Dendritic cell treated with granulocyte-macrophage colony-stimulating factor and Interleukin-4, amounts not matched to agents 40 ng/mL and 50 ng/mL, for 4 days (primary cell): ENCODE measurements at regions of chr11 and their contacts with region 1.

Region 1: GRCh38 chr11:33161120-33162005 is at the start of gene CSTF3:
- H3K4me3 Mint-ChIP-seq: peak within 1 kb of the TSS; percentile 95
- H3K27ac Mint-ChIP-seq: peak within 1 kb of the TSS; percentile 95
- H3K4me1 Mint-ChIP-seq: peaks cover 44% of the 10 kb centered on the region
- H3K27me3 Mint-ChIP-seq: no peaks in the 10 kb centered on the region

Region 2: GRCh38 chr11:32968541-32968940 is 192.8 kb before region 1 on chr11:
- intact Hi-C with region 1: no loop called
- H3K4me3 Mint-ChIP-seq: no peak overlapping the region
- H3K27ac Mint-ChIP-seq: peak overlapping the region; percentile 20
- H3K4me1 Mint-ChIP-seq: no peaks in the 10 kb centered on the region
- H3K27me3 Mint-ChIP-seq: no peaks in the 10 kb centered on the region

Region 3: GRCh38 chr11:33039274-33040032 is 121.9 kb before region 1 on chr11 and contains the start of gene TCP11L1:
- intact Hi-C with region 1: loop called (anchors 1 kb)
- H3K4me3 Mint-ChIP-seq: peak within 1 kb of the TSS; percentile 84
- H3K27ac Mint-ChIP-seq: peak within 1 kb of the TSS; percentile 98
- H3K4me1 Mint-ChIP-seq: peaks cover 36% of the 10 kb centered on the region
- H3K27me3 Mint-ChIP-seq: peaks cover 1% of the 10 kb centered on the region

Region 4: DNA sequence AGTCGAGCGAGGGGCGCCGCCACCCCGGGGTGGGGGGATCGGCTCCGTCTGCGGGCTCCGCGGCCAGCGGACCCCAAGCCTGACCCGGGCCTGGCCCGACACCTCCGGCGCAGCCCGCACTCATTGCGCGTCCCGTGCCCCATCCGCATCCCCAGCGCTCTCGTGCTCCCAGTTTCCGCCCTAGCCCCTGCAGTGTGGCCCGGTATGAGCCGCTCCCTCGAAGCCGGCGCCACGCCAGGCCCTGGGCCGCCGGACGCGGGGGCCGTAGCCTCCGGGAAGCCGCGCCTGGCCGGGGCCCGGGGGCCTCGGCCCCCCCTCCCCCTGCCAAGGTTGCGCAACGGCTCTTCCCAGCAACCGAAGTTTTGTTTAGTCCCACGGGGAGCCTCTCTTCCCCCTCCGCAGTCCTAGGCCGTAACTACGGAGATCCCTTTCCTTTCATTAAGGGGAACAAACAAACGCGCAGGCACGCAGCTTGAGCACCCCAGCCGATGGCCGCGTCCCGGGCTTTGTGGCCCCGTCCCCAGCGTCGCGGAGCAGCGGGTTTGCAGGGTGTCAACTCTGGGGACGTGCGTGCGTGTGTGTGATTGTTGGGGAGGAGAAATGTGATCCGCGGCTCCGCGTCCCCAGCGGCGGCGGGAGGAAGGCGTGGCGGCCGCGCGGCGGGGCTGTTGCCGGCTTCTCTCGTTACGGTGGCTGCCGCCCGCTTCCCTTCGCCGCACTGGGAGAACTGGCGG is 96.7 kb after region 1 on chr11:
- intact Hi-C with region 1: loop called (anchors 2 kb)
- H3K4me3 Mint-ChIP-seq: peak overlapping the region; percentile 88
- H3K27ac Mint-ChIP-seq: peak overlapping the region; percentile 93
- H3K4me1 Mint-ChIP-seq: peaks cover 51% of the 10 kb centered on the region
- H3K27me3 Mint-ChIP-seq: no peaks in the 10 kb centered on the region

Region 5: DNA sequence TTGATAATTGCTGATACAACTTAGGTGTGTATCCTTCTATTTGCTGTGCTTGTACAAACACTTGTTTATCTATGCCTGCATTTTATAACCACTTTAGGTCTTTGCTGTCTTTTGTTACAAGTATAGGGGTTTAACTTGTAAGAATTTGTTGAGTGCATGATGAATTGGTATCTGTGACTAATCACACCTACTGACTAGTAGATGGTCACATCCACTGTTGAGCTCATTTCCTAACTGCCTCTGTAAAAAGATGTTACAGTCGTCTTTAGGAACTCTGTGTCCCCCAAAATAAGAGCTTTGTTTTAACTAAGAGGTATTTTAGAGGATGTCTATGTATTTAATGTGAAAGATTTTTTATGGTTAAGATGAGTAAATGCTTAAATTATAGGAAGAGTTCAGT is 156.3 kb after region 1 on chr11:
- intact Hi-C with region 1: no loop called
- H3K4me3 Mint-ChIP-seq: no peak overlapping the region
- H3K27ac Mint-ChIP-seq: no peak overlapping the region
- H3K4me1 Mint-ChIP-seq: peaks cover 4% of the 10 kb centered on the region
- H3K27me3 Mint-ChIP-seq: no peaks in the 10 kb centered on the region

Region 6: GRCh38 chr11:33329705-33330329 is 168.5 kb after region 1 on chr11:
- intact Hi-C with region 1: loop called (anchors 1 kb)
- H3K4me3 Mint-ChIP-seq: no peak overlapping the region
- H3K27ac Mint-ChIP-seq: no peak overlapping the region
- H3K4me1 Mint-ChIP-seq: peaks cover 19% of the 10 kb centered on the region
- H3K27me3 Mint-ChIP-seq: no peaks in the 10 kb centered on the region